Activated T-helper 1 cell treated with anti-CD3 and anti-CD28 coated beads, Interleukin-12 subunit alpha, Interleukin-12 subunit beta, Interleukin-2, Interleukin-4 antibody, amounts not matched to agents 30 ng/mL and 10 ng/mL and 1 ng/mL, durations not matched to agents 14 hours and 24 hours and 36 hours (primary cell): ENCODE measurements at regions of chr17 and their contacts with region 1.

Region 1: DNA sequence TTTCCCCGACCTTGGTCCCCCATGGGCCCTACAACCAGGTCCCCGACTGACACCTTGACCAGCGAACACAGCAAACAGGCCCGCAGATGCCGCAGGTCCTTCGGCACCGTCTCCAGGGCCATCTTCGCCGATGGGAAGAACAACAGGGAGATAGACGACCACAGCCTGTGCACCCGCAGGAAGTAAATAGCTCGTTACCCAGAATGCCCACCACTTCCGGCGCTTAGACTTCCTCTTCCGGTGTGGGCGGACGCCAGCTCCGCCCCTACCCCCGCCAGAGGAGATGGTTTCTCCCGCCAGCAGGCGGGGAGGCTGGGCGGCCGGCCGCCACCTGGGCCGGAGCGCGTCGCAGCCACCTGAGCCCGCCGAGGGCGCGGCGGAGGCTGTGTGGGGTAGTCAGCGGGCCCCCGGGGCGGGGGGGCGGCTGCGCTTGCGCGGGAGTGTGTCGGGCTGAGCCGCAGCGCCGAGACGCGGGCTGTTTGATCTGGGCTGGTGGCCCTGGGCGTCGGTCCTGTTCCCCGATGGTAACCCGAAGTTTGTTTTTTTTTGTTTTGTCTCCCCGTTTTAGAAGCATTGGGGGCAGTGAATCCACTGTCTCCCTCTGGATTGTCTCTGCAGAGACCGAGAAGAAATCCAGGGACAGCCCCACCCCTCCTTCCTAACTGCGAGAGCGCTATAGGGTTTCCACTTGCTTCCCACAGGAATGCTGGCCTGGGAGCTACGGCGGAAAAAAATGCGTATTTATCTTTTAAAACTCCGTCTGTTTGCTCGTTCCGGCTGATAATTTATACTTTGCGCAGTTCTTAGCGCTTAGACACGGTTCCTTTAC is at the start of gene SUPT4H1:
- DNase-seq: peak; percentile 90
- H3K4me3 Mint-ChIP-seq: peak within 1 kb of the TSS; percentile 100
- H3K27ac Mint-ChIP-seq: peak within 1 kb of the TSS; percentile 96
- H3K4me1 Mint-ChIP-seq: peaks cover 57% of the 10 kb centered on the region
- H3K27me3 Mint-ChIP-seq: no peaks in the 10 kb centered on the region
- total RNA-seq, gene SUPT4H1: 138 and 142 TPM in 2 replicates

Region 2: DNA sequence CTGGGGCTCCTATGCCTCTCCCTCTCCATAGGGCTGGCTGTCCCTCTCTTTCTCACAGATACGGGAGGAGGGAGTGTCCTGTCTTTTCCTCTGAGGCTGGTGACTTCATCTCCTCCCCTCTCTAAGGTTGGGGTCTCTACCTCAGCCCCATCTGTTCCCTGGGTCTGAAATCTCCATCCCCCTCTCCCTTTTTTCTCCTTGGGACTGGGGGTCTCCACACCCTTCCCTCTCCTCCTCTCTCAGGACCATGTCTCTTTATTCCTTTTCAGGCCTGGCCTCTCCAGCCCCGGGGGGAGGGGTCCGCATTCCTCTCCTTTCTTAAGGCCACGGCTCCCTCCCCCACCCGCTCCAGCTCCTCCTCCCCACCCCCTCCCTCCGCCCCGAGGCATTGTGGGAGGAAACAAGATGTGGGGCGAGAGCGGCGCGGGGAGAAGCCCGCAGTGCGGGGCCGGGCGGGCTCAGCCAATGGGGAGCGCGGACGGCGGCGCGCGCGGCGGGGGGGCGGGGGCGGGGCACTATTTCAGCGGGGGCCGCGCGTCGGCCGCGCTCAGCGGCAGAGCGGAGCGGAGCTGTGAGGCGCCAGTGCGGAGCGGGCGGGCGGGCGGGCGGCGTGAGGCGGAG is 269.2 kb before region 1 on chr17 and contains the start of gene DYNLL2:
- intact Hi-C with region 1: loop called (anchors 5 kb)
- DNase-seq: peak; percentile 84
- H3K4me3 Mint-ChIP-seq: peak within 1 kb of the TSS; percentile 90
- H3K27ac Mint-ChIP-seq: peak within 1 kb of the TSS; percentile 78
- H3K4me1 Mint-ChIP-seq: peaks cover 32% of the 10 kb centered on the region
- H3K27me3 Mint-ChIP-seq: peaks cover 25% of the 10 kb centered on the region
- total RNA-seq, gene DYNLL2: 35.8 and 37.6 TPM in 2 replicates

Region 3: DNA sequence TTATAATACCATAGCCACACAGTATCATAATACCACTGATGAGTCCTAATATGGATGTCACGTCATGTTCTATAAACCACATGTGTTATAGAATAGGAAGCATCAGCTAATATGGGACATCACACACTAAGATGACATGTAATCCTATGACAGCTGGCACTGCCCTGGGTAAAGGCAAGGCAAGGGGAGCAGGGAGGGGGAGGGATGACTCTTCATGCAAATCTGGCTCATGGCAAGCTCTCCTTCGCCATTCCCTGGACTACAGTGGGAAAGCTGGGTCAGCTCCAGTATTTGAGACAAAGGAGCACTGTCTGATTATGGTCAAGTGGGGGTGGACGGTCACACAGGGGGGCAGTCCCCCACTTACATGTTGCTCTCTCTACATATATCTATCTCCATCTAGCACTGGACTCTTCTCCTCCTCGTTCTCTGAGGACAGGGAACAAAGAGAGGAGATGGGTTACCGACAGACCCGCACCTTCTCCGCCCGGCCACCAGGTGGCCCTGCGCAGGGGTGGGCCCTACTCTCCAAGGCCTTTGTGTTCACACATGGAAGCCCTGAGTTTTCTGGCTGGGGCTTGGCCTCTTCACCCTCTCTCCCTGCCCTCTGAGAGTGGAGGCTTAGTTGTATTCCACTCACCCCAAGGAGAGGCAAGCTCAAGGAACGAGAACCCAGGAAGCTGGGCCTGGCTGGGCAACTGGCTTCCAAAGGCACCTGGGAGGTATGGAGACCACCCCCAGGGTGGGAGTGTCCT is 48.1 kb before region 1 on chr17:
- intact Hi-C with region 1: loop called (anchors 1 kb)
- DNase-seq: peak; percentile 42
- H3K4me3 Mint-ChIP-seq: no peak overlapping the region
- H3K27ac Mint-ChIP-seq: no peak overlapping the region
- H3K4me1 Mint-ChIP-seq: peaks cover 6% of the 10 kb centered on the region
- H3K27me3 Mint-ChIP-seq: no peaks in the 10 kb centered on the region

Region 4: GRCh38 chr17:58329035-58329809 is 23.0 kb before region 1 on chr17:
- intact Hi-C with region 1: loop called (anchors 1 kb)
- DNase-seq: peak; percentile 81
- H3K4me3 Mint-ChIP-seq: peak overlapping the region; percentile 100
- H3K27ac Mint-ChIP-seq: peak overlapping the region; percentile 93
- H3K4me1 Mint-ChIP-seq: peaks cover 45% of the 10 kb centered on the region
- H3K27me3 Mint-ChIP-seq: peaks cover 2% of the 10 kb centered on the region

Region 5: GRCh38 chr17:58417300-58418092 is 65.3 kb after region 1 on chr17 and contains the start of gene RNF43:
- intact Hi-C with region 1: loop called (anchors 1 kb)
- DNase-seq: peak; percentile 75
- H3K4me3 Mint-ChIP-seq: peak within 1 kb of the TSS; percentile 2
- H3K27ac Mint-ChIP-seq: peak within 1 kb of the TSS; percentile 47
- H3K4me1 Mint-ChIP-seq: peaks cover 28% of the 10 kb centered on the region
- H3K27me3 Mint-ChIP-seq: peaks cover 7% of the 10 kb centered on the region
- total RNA-seq, gene RNF43: 0.47 and 0.86 TPM in 2 replicates